ENCODE measurements at regions of chr19 and their contacts with region 1.

Region 1: DNA sequence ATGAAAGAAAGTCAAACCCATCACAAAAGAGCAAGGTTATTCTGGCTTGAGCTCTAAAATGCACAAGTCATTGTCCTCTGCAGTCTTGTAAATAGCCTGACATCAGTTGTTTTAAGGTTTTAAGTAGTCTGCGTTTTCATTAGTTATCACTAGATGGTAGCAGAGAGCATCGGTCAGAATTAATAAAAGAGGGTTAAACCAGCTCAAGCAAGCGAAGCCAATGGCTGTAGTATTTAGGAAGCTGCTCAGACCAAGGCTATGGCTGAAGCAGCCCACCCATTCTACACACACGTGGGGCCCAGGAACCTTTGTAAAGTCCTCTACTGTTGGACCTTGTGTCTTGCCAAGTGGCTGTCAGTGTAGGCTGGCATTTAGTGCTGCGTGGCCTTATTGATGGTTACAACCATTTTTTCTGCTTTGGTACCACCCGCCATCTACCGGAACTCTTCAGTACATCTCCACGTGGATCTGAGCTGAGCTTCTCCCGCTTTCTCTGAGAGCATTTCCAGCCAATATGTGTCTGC is 13.3 kb upstream of the ZNF57 start:
- DNase-seq: no peak
- H3K4me3 ChIP-seq: no peak overlapping the region
- CTCF ChIP-seq: peak; percentile 33

Region 2: GRCh38 chr19:2867025-2867991 is 20.1 kb before region 1 on chr19 and contains the start of gene ZNF556:
- CTCF ChIA-PET with region 1: interaction called, 21 read pairs
- POLR2A ChIA-PET with region 1: no interaction called
- DNase-seq: no peak
- H3K4me3 ChIP-seq: no peak within 1 kb of the TSS
- CTCF ChIP-seq: no peak

Region 3: GRCh38 chr19:2900296-2901252 is 13.1 kb after region 1 on chr19 and contains the start of gene ZNF57:
- CTCF ChIA-PET with region 1: interaction called, 16 read pairs
- POLR2A ChIA-PET with region 1: interaction called, 3 read pairs
- DNase-seq: peak; percentile 90
- H3K4me3 ChIP-seq: peak within 1 kb of the TSS; percentile 95
- CTCF ChIP-seq: no peak

Region 4: DNA sequence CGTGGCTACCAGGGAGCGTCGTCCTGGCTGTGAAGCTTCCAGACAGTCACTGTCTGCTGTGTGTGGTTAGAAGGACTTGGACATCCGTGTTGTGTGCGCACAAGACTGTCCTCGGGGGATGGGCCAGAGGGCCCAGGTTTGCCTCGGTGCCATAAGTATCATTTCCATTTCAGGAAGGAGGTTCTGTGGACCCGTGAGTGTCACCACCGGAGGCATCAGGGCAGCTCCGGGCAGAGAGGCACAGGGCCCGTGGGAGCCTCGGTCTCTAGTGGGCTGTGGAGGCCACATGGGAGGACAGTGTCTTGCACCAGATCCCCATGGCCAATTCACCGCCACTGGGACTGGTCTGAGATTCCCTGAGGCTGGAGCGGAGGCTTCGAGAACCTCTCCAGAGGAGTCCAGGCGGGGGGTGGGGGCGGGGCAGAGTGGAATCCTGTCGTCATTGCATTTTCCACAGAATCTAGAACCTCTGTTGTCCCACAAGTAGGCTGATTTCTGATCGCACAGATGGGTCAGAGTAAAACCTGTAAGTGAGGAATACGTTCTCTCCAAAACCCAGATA is 19.3 kb after region 1 on chr19:
- CTCF ChIA-PET with region 1: interaction called, 11 read pairs
- POLR2A ChIA-PET with region 1: no interaction called
- DNase-seq: no peak
- H3K4me3 ChIP-seq: no peak overlapping the region
- CTCF ChIP-seq: no peak

Region 5: GRCh38 chr19:2912306-2912705 is 24.9 kb after region 1 on chr19:
- CTCF ChIA-PET with region 1: interaction called, 11 read pairs
- POLR2A ChIA-PET with region 1: no interaction called
- DNase-seq: no peak
- H3K4me3 ChIP-seq: no peak overlapping the region
- CTCF ChIP-seq: no peak

Region 6: DNA sequence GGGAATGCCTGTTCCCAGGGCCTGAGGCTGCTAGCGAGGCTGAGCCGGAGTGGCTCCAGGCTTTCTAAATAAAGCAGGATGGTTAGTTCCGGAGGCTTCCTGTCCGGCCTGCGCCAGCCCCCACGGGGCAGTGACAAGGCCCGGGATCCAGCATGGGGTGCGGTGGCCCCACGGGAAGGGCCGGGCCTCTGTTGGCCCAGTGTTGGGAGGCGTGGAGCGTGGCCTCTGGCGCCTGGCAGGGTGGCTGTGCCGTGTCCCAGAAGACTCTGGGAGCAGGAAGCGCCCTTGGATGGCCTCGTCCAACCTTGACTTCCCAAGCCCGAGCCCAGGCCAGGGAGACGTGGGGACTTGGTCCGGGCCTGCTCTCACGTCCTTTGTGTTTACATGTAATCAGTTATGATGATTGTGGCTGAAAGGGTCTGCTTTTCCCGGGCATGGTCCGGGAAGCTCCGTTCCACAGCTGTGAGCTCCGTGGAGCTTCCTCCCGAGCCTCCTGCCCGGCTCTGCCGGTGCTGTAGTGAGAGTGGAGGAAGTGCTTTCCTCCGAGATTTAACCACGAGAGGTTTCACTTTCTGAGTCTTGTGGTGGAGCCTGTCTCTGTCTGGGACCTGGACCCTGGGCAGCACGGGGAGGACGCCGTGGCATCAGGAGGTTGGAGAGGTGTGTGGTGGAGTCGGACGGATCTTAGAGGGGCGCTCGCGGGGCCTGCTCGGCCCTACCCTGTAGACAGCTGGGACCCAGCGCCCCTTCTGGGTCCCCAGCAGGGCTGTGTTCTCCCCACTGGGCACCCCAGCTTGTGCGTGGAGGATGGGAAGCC is 211.3 kb after region 1 on chr19:
- CTCF ChIA-PET with region 1: no interaction called
- POLR2A ChIA-PET with region 1: no interaction called
- DNase-seq: no peak
- H3K4me3 ChIP-seq: peak overlapping the region; percentile 15; the same call in 1 of the 2 replicates
- CTCF ChIP-seq: no peak

Measured in AG04449 (cell line).